ENCODE measurements at regions of chrX and their contacts with region 1.

Region 1: GRCh38 chrX:138775517-138775916 is 64.0 kb upstream of the FGF13 start:
- DNase-seq: no peak
- H3K4me3 ChIP-seq: no peak overlapping the region
- H3K27ac ChIP-seq: no peak overlapping the region
- H3K4me1 ChIP-seq: no peaks in the 10 kb centered on the region
- H3K27me3 ChIP-seq: no peaks in the 10 kb centered on the region
- CTCF ChIP-seq: peak in 4 of 6 experiments; percentile 16 to 47 (median 26)
- POLR2A ChIP-seq: no peak

Region 2: DNA sequence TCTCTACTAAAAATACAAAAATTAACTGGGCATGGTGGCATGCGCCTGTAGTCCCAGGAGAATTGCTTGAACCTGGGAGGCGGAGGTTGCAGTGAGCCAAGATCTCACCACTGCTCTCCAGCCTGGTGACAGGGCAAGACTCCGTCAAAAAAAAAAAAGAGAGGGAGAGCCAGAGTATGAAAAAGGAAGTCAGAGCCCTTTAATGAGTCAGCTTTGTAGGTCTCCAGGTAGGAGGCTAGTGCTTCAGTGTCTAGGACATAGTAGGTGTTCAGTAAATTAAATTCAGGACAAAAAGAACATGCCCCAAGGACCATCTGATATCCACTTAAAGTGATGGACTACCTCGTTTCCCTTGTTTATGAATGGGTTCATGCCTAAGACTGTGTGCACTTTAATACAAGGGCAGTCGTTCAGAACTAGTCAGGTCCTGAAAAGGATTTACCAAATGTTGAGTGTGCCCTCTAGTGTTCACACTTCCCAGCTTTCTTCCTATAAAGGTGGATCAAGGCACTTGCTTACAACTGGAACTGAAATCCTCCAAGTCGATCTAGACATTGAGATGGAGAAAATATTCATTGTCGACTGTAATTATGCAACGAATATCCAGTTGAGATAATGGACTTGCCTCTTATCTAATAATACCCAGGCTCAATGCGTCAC is 784.0 kb after region 1 on chrX:
- intact Hi-C with region 1: loop called (anchors 10 kb)
- DNase-seq: no peak
- H3K4me3 ChIP-seq: no peak overlapping the region
- H3K27ac ChIP-seq: no peak overlapping the region
- H3K4me1 ChIP-seq: no peaks in the 10 kb centered on the region
- H3K27me3 ChIP-seq: no peaks in the 10 kb centered on the region
- CTCF ChIP-seq: peak; percentile 23 to 49 (median 40)
- POLR2A ChIP-seq: no peak